PC-3 (cell line): ENCODE measurements at regions of chr4 and their contacts with region 1.

Region 1: DNA sequence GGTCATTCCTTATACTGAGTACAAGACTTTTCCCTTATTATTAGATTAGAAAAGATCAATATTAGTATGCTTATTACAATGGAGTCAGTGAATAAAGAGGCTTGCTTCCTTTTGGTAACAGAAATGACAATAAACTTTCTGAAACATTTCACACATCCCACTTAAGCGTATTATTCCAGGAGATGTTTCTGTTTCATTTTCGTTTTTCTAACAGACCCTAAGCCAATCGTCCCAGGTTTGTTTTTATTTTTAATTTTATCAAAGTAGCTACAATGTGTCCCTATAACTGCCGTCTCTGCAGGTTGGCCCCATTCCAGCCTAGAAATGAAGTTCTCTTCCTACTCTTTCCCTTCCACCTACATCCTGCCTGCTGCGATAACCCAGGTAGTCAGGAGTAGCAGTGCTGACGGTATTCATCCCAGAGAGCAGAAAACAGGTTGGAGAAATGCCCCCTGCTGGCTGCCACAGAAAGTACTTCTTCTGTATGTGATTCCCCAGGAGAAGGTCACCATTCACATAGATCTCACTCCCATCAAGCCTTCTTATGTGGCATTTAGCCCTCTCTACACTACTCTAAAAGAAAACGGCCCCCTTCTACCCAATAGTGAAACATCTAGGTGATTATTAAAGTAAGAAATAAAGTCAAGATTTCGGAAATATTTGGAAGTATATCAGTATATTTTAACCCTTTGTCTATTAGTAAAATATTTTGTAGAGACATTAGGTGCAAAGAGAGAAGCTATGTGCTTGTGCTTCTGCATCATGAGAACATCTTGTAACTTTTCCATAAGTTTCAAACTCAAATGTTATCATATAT is 40.4 kb downstream of the ENPEP start:
- DNase-seq: peak; percentile 78
- ATAC-seq: peak; percentile 97
- H3K4me3 ChIP-seq: peak overlapping the region; percentile 76
- H3K27ac ChIP-seq: no peak overlapping the region
- H3K4me1 ChIP-seq: no peaks in the 10 kb centered on the region
- H3K27me3 ChIP-seq: no peaks in the 10 kb centered on the region
- CTCF ChIP-seq: peak; percentile 78

Region 2: DNA sequence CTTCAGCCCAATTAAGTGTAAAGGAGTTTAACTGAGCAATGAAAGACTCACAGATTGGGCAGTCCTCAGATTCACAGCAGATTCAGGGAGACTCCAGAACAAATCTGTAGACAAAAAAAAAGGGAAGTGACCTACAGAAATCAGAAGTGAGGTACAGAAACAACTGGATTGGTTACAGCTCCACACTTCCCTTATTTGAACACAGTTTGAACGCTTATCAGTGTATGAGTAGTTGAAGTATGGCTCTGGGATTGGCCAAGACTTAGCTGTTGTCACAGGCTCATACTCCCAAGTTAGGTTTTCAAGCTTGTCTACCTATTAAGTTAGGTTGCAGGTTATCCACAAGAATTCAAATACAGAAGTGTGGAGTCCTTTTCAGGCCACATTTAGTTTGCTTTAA is 205.5 kb before region 1 on chr4:
- CTCF ChIA-PET with region 1: no interaction called
- POLR2A ChIA-PET with region 1: no interaction called
- intact Hi-C with region 1: loop called (anchors 10 kb)
- DNase-seq: no peak
- ATAC-seq: no peak
- H3K4me3 ChIP-seq: no peak overlapping the region
- H3K27ac ChIP-seq: no peak overlapping the region
- H3K4me1 ChIP-seq: no peaks in the 10 kb centered on the region
- H3K27me3 ChIP-seq: no peaks in the 10 kb centered on the region
- CTCF ChIP-seq: no peak

Region 3: GRCh38 chr4:110586131-110586850 is 70.0 kb after region 1 on chr4:
- CTCF ChIA-PET with region 1: interaction called, 5 read pairs
- POLR2A ChIA-PET with region 1: no interaction called
- intact Hi-C with region 1: loop called (anchors 1 kb)
- DNase-seq: peak; percentile 72
- ATAC-seq: peak; percentile 78
- H3K4me3 ChIP-seq: peak overlapping the region; percentile 55; the same call in 1 of the 2 replicates
- H3K27ac ChIP-seq: no peak overlapping the region
- H3K4me1 ChIP-seq: no peaks in the 10 kb centered on the region
- H3K27me3 ChIP-seq: no peaks in the 10 kb centered on the region
- CTCF ChIP-seq: peak; percentile 66